ENCODE measurements at regions of chrX and their contacts with region 1.

Region 1: GRCh38 chrX:119004920-119005524 is 30.6 kb downstream of the LONRF3 start:
- DNase-seq: peak; percentile 72
- ATAC-seq: peak; percentile 77

Region 2: GRCh38 chrX:119067023-119067739 is 62.2 kb after region 1 on chrX:
- intact Hi-C with region 1: loop called (anchors 10 kb)
- DNase-seq: peak; percentile 69
- ATAC-seq: peak; percentile 84

Measured in Right ventricle myocardium superior (tissue), 1 donor.